ENCODE measurements at regions of chr1 and their contacts with region 1.

Region 1: GRCh38 chr1:99481391-99481996 is 164.4 kb upstream of the PALMD start:
- DNase-seq: peak; percentile 47
- H3K4me3 Mint-ChIP-seq: no peak overlapping the region
- H3K27ac Mint-ChIP-seq: no peak overlapping the region
- H3K4me1 Mint-ChIP-seq: no peaks in the 10 kb centered on the region
- H3K27me3 Mint-ChIP-seq: no peaks in the 10 kb centered on the region
- CTCF ChIP-seq: peak; percentile 34

Region 2: GRCh38 chr1:99218999-99219398 is 262.5 kb before region 1 on chr1:
- CTCF ChIA-PET with region 1: no interaction called
- intact Hi-C with region 1: no loop called
- DNase-seq: no peak
- H3K4me3 Mint-ChIP-seq: no peak overlapping the region
- H3K27ac Mint-ChIP-seq: no peak overlapping the region
- H3K4me1 Mint-ChIP-seq: no peaks in the 10 kb centered on the region
- H3K27me3 Mint-ChIP-seq: no peaks in the 10 kb centered on the region
- CTCF ChIP-seq: no peak

Region 3: DNA sequence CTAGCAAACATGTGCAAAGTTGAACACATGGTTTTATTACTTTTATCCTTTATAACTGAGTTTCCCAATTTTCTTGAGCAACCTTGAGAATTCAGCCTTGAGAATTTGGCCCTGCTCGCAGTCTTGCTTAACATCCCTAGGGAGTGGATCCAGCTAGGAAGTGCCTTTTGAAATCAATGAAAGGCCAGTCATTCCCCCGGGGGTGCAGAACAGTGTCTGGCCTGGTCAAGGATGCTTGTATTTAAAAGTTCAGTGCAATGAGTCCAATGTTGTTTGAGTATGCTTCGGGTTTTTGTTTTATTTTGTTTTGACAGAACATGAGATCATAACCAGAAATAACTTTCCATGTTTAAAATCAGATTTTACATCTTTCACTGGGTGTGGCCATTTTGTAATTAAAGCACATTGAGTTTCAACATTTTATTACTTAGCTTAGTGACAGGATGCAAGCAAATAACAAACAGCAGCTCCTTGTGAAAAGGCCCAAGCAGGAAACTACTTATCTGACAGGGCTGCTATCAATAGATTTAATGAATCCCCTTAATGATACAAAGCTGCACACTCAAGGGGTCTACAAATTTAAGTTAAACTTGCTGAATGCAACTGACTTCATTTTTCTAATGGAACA is 181.2 kb after region 1 on chr1:
- CTCF ChIA-PET with region 1: no interaction called
- intact Hi-C with region 1: no loop called
- DNase-seq: no peak
- H3K4me3 Mint-ChIP-seq: no peak overlapping the region
- H3K27ac Mint-ChIP-seq: no peak overlapping the region
- H3K4me1 Mint-ChIP-seq: peaks cover 10% of the 10 kb centered on the region
- H3K27me3 Mint-ChIP-seq: no peaks in the 10 kb centered on the region
- CTCF ChIP-seq: no peak

Region 4: DNA sequence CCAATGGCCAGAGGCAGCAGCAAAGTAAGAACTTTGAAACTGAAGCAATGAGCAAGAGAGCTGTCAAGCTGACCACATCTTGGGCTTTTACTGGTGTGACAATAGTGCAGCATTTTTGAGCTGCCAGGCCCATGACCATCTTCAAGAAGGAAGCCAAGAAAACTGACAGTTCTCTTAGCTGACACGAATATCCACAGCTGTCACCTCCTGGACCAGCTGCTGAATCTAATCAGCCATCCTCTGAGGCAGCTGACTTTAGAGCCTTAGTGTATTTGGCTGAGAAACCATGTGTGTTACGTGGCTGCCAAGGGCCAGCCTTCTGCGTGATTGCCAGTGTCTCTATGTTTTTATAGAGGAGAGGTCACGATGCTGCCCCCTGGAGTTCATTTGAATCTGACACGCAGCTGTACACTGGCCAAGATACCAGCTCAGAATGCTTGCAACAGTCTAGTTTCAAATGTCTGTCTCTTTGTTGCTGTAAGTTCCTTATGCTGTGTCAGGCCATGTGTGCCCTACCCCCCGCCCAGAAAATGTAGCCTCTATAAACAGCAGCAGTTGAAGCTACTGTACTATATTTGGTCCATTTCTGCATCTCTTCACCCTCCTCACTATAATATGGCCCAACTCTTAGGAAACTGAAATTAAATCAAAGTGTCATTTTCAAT is 204.2 kb after region 1 on chr1:
- CTCF ChIA-PET with region 1: interaction called, 3 read pairs
- intact Hi-C with region 1: loop called (anchors 2 kb)
- DNase-seq: peak; percentile 70
- H3K4me3 Mint-ChIP-seq: no peak overlapping the region
- H3K27ac Mint-ChIP-seq: no peak overlapping the region
- H3K4me1 Mint-ChIP-seq: peaks cover 9% of the 10 kb centered on the region
- H3K27me3 Mint-ChIP-seq: no peaks in the 10 kb centered on the region
- CTCF ChIP-seq: peak; percentile 37

Region 5: DNA sequence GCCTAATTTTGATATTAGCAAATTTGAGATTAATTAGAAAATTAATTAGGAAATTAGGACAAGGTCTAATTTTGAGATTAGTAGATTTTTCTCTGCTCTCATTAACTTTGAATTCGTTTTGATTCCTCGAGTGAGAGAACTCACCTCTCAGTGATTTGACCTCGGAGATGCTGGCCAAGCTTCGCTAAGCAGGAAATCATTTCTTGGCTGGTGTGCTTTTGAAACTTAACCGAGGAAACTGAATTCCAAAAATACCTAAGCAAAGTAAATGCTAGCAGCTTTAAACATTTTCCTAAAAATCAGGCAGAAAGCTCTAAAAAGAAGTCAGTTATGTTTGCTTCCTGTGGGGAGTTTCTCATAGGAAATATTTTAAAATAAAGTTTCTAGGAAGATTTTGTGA is 905.7 kb after region 1 on chr1:
- CTCF ChIA-PET with region 1: no interaction called
- intact Hi-C with region 1: no loop called
- DNase-seq: no peak
- H3K4me3 Mint-ChIP-seq: no peak overlapping the region
- H3K27ac Mint-ChIP-seq: no peak overlapping the region
- H3K4me1 Mint-ChIP-seq: no peaks in the 10 kb centered on the region
- H3K27me3 Mint-ChIP-seq: no peaks in the 10 kb centered on the region
- CTCF ChIP-seq: no peak

Measured in Calu3 (cell line).